ENCODE measurements at regions of chr16 and their contacts with region 1.

Region 1: DNA sequence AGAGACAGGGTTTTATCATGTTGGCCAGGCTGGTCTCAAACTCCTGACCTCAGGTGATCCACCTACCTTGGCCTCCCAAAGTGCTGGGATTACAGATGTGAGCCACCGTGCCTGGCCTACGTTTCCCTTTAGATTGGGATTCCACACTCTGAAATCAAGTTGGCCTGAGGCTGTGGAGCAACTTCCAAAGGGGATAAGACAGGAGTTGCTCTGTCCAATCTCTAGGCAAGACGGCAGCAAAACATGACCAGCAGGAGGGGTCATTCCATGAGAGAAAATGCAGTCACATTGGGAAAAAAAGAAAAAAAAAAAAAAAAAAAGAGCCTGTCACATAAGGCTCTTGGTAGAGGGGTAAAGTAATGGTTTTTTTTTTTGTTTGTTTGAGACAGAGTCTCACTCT is 16.5 kb downstream of the MLKL start:
- DNase-seq: no peak
- ATAC-seq: no peak
- H3K4me3 ChIP-seq: no peak overlapping the region
- H3K27ac ChIP-seq: no peak overlapping the region
- H3K4me1 ChIP-seq: no peaks in the 10 kb centered on the region; the same call in 1 of the 2 replicates
- H3K27me3 ChIP-seq: no peaks in the 10 kb centered on the region
- CTCF ChIP-seq: no peak

Region 2: GRCh38 chr16:74611721-74612120 is 72.4 kb before region 1 on chr16:
- CTCF ChIA-PET with region 1: no interaction called
- POLR2A ChIA-PET with region 1: interaction called, 11 read pairs
- in situ Hi-C with region 1: no loop called
- intact Hi-C with region 1: no loop called
- DNase-seq: no peak
- ATAC-seq: no peak
- H3K4me3 ChIP-seq: no peak overlapping the region
- H3K27ac ChIP-seq: no peak overlapping the region
- H3K4me1 ChIP-seq: 0 out of 2 replicates have a peak, but pooled peaks cover 6% of the 10 kb centered on the region
- H3K27me3 ChIP-seq: no peaks in the 10 kb centered on the region
- CTCF ChIP-seq: no peak

Region 3: GRCh38 chr16:74659041-74659440 is 25.1 kb before region 1 on chr16:
- CTCF ChIA-PET with region 1: interaction called, 11 read pairs
- POLR2A ChIA-PET with region 1: no interaction called
- in situ Hi-C with region 1: no loop called
- intact Hi-C with region 1: no loop called
- DNase-seq: no peak
- ATAC-seq: no peak
- H3K4me3 ChIP-seq: no peak overlapping the region
- H3K27ac ChIP-seq: no peak overlapping the region
- H3K4me1 ChIP-seq: no peaks in the 10 kb centered on the region; the same call in 1 of the 2 replicates
- H3K27me3 ChIP-seq: no peaks in the 10 kb centered on the region
- CTCF ChIP-seq: no peak

Measured in Panc1 (cell line).